ENCODE measurements at regions of chr5 and their contacts with region 1.

Region 1: GRCh38 chr5:38193015-38193581 is 65.3 kb upstream of the EGFLAM start:
- DNase-seq: peak; percentile 64
- H3K4me3 ChIP-seq: no peak overlapping the region
- H3K27ac ChIP-seq: no peak overlapping the region
- H3K4me1 ChIP-seq: no peaks in the 10 kb centered on the region
- H3K27me3 ChIP-seq: peaks cover 13% of the 10 kb centered on the region
- CTCF ChIP-seq: peak; percentile 77 to 84 (median 81)
- EP300 ChIP-seq: no peak
- POLR2A ChIP-seq: no peak

Region 2: GRCh38 chr5:36728697-36729543 is 1464.2 kb before region 1 on chr5:
- in situ Hi-C with region 1: no loop called
- intact Hi-C with region 1: no loop called
- DNase-seq: no peak
- H3K4me3 ChIP-seq: no peak overlapping the region
- H3K27ac ChIP-seq: no peak overlapping the region
- H3K4me1 ChIP-seq: no peaks in the 10 kb centered on the region
- H3K27me3 ChIP-seq: no peaks in the 10 kb centered on the region
- CTCF ChIP-seq: peak; percentile 55 to 70 (median 64)
- EP300 ChIP-seq: no peak
- POLR2A ChIP-seq: no peak

Region 3: DNA sequence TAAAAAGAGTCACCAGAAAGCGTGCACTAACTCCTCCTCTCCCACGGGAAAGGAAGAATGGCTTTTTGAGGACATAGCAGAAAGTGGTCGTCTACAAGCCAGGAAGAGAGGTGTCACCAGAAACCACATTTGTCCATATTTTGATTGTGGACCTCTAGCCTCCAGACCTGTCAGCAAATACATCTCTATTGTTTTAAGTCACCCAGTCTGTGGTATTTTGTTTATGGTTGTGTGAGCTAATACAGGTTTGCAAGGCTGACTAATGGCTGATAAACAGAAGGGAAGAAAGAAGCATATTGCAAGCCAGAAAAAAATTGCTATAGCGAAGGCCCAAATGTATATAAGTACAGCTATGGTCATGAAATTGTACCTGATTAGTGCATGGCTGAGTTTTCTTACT is 792.6 kb before region 1 on chr5:
- in situ Hi-C with region 1: loop called in 3 of 4 experiments (anchors 10 to 25 kb)
- intact Hi-C with region 1: no loop called
- DNase-seq: no peak
- H3K4me3 ChIP-seq: no peak overlapping the region
- H3K27ac ChIP-seq: no peak overlapping the region
- H3K4me1 ChIP-seq: peaks cover 0 to 2% (median 0%) of the 10 kb centered on the region in 4 donors
- H3K27me3 ChIP-seq: no peaks in the 10 kb centered on the region
- CTCF ChIP-seq: no peak
- EP300 ChIP-seq: no peak
- POLR2A ChIP-seq: no peak

Region 4: DNA sequence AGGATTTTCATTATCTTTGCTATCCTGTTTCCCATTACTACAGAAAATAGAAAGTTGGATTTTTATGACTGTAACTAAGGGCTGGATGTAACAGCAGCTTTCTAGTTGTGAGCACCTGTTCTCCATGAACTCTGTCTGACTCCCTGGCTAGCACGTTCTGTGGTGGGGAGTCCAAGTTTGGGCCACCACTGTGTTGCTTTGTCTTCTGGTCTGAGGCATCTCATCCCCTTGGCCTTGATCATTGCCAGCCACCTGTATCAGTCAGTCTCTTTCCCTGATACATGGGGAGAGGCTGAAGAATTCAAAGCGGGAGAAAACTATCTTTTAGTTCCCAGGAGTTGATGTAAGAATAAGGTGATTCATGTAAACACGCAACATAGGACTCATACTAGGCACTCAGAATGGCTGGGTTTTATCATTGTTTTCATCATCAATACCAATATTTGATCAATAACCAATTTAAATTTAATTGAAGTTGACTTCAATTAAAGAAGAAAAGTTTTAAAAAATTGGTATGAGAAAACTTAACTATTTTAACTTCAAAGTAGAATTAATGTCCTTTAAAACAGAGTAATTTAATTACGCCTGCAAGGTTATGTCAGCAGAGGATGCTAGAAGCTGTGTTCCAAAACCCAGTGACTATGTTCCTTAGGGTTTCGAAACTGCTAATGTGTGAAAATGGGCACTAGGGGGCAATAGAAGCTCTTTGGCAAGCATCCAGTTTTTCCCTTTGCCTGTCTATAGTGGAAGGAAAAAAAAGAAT is 780.4 kb before region 1 on chr5:
- in situ Hi-C with region 1: loop called (anchors 10 to 25 kb)
- intact Hi-C with region 1: loop called (anchors 10 kb)
- DNase-seq: peak; percentile 66
- H3K4me3 ChIP-seq: no peak overlapping the region
- H3K27ac ChIP-seq: no peak overlapping the region
- H3K4me1 ChIP-seq: no peaks in the 10 kb centered on the region
- H3K27me3 ChIP-seq: no peaks in the 10 kb centered on the region
- CTCF ChIP-seq: peak; percentile 70 to 93 (median 83)
- EP300 ChIP-seq: no peak
- POLR2A ChIP-seq: no peak

Region 5: DNA sequence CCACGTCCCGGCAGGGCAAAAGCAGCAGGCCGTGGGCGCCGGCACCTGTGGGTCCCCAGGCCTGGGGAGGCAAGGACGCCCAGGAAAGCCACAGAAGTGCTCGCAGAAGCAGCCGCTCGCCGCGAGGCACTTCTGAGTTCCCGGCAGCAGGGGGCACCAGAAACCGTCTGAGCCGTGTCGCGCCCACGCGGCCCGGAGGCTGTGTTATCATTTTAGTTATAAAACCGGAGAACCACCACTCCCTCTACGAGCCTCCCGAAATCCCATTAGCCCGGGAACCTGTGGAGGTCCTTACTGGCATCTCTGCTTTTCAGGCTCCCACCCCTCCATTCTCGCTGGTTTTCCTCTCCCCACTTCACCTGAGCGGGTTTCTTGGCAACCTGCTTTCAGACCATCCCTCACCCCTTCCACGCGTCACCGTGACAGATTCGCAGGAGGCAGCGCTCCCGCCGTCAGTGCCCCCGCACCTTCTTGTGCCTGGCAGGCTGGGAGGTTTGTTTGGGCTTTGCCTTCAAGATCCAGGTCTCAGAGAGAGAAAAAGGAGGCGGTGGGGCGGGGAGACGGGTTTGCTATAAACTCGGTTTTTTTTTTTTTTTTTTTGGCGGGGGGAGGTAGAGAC is 355.6 kb before region 1 on chr5:
- in situ Hi-C with region 1: loop called (anchors 10 kb)
- intact Hi-C with region 1: loop called (anchors 1 kb)
- DNase-seq: peak; percentile 67
- H3K4me3 ChIP-seq: peak overlapping the region; percentile 30 to 60 (median 42)
- H3K27ac ChIP-seq: peak overlapping the region; percentile 86 to 93 (median 86)
- H3K4me1 ChIP-seq: peaks cover 0 to 39% (median 8%) of the 10 kb centered on the region in 4 donors
- H3K27me3 ChIP-seq: peaks cover 86% of the 10 kb centered on the region
- CTCF ChIP-seq: peak; percentile 63 to 74 (median 71)
- EP300 ChIP-seq: no peak
- POLR2A ChIP-seq: no peak

Region 6: GRCh38 chr5:37875051-37875787 is 317.9 kb before region 1 on chr5:
- in situ Hi-C with region 1: no loop called
- intact Hi-C with region 1: no loop called
- DNase-seq: no peak
- H3K4me3 ChIP-seq: no peak overlapping the region
- H3K27ac ChIP-seq: no peak overlapping the region
- H3K4me1 ChIP-seq: no peaks in the 10 kb centered on the region
- H3K27me3 ChIP-seq: no peaks in the 10 kb centered on the region
- CTCF ChIP-seq: no peak
- EP300 ChIP-seq: no peak
- POLR2A ChIP-seq: no peak

Region 7: DNA sequence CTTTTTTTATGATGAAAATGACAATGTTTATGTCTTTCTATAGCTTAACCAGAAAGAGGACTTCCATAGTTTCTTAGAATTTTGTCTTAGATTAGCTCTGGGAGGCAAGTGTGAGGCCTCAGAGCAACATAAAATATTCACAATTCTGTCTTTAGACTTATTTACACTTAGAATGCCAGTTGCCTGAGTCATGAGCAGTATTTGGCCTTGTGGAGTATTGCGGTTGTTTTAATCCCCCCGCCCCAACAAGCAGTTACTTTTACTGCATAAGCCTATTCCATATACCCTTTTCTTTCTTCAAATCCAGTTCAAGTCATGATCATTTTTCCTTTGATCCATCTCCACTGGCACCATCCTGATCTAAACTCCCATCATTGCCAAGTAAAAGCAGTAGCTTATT is 132.7 kb before region 1 on chr5:
- in situ Hi-C with region 1: no loop called
- intact Hi-C with region 1: no loop called
- DNase-seq: no peak
- H3K4me3 ChIP-seq: no peak overlapping the region
- H3K27ac ChIP-seq: peak overlapping the region in 3 of 4 donors; percentile 37 to 45 (median 37)
- H3K4me1 ChIP-seq: no peaks in the 10 kb centered on the region
- H3K27me3 ChIP-seq: no peaks in the 10 kb centered on the region
- CTCF ChIP-seq: no peak
- EP300 ChIP-seq: no peak
- POLR2A ChIP-seq: no peak

Region 8: DNA sequence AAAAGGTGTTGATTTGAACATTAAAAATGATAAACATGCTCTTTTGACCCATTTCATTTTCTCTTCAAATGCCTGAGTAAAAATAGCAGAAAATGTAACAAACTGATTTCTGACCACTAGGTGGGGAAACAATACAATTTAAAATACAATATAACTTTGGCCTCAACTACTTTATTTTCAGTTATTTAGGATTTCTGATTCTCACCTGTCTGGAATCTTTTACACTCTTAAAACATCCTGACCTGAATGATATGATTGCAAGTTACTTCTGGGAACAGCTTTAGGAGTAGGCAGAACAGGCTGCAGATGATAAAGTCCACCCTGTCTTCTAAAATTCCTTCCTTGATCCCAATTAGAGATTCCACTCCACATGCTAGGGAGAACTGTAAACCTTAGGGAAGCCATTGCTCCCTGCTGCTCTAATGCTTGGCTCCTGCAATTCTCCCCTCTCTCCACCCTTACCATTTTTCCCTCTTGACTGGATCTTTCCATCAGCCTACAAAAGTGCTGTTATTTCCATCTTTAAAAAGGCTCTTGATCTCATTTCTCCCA is 956.0 kb after region 1 on chr5:
- in situ Hi-C with region 1: no loop called
- intact Hi-C with region 1: no loop called
- DNase-seq: no peak
- H3K4me3 ChIP-seq: no peak overlapping the region
- H3K27ac ChIP-seq: no peak overlapping the region
- H3K4me1 ChIP-seq: no peaks in the 10 kb centered on the region
- H3K27me3 ChIP-seq: no peaks in the 10 kb centered on the region
- CTCF ChIP-seq: peak in 3 of 5 experiments; percentile 15 to 22 (median 19)
- EP300 ChIP-seq: no peak
- POLR2A ChIP-seq: no peak

Measured in transverse colon (tissue), 4 donors.